ENCODE measurements at regions of chr6 and their contacts with region 1.

Region 1: GRCh38 chr6:41787219-41787917 is at the start of gene TOMM6:
- DNase-seq: peak; percentile 91
- H3K4me3 ChIP-seq: peak within 1 kb of the TSS; percentile 66 to 100
- H3K27ac ChIP-seq: peak within 1 kb of the TSS; percentile 90 to 93
- H3K4me1 ChIP-seq: peaks cover 9 to 17% of the 10 kb centered on the region in 2 experiments; a peak in 2 of 4 replicates
- H3K27me3 ChIP-seq: no peaks in the 10 kb centered on the region
- CTCF ChIP-seq: peak; percentile 70
- EP300 ChIP-seq: no peak
- RAD21 ChIP-seq: peak; percentile 13; the same call in 1 of the 2 replicates
- polyA plus RNA-seq, gene TOMM6: 493 and 565 TPM in 2 replicates

Region 2: DNA sequence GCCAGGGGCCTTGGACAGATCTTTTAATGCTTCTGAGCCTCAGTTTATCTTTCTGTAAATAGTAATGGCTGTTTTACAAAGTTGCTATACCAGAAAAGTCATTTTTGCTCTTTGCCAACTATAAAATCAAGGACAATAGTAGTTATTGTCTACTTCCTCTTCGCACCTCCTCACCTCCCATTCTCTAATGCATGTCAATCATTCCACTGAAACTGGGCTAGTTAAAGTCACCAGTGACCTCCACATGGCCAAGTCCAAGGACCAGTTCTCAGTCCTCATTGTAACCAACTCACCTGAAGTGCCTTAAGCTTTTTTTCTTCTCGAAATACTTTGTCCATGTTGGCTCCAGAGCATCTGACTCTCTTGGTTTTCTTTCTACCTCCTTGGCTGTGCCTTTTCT is 400.8 kb before region 1 on chr6:
- CTCF ChIA-PET with region 1: no interaction called
- POLR2A ChIA-PET with region 1: no interaction called
- DNase-seq: no peak
- H3K4me3 ChIP-seq: no peak overlapping the region
- H3K27ac ChIP-seq: no peak overlapping the region
- H3K4me1 ChIP-seq: no peaks in the 10 kb centered on the region
- H3K27me3 ChIP-seq: peaks cover 60% of the 10 kb centered on the region
- CTCF ChIP-seq: no peak
- EP300 ChIP-seq: no peak
- RAD21 ChIP-seq: no peak

Region 3: DNA sequence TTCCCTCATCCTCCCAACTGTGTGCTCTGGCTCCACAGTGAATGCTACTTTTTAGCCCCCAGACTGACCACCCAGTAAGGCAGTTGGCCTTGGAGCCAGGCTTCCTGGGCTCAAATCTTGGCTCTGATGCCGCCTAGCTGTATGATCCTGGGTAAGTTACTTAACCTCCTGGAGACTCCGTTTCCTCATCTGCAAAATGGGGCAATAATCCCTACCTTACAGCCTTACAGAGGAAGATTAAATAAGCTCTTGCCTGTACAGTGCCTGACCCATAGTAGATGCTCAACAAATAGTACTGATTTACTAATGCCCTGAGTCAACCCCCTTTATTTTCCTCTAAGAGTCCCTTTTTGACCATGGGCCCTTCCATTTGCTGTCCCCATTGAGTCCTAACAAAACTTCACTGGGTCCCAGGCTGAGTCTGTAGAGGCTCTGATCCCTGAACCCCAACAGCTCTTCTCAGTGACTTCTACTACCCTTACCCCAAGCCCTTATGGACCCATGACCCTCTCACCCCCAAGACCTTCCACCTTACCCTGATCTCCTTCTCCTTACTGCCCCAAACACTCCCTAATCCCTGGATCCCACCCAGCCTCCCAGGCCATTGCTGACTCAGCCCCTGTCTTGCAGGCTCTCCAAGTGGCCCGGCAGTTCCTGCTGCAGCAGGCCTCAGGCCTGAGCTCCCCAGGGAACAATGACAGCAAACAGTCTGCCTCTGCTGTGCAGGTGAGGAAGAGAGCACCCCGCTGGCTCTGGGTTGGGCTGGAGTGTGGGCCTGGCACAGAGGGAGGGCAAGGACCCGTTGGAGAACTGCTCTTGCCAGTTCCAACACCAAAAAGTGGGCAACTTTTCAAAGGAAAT is 209.8 kb before region 1 on chr6:
- CTCF ChIA-PET with region 1: no interaction called
- POLR2A ChIA-PET with region 1: no interaction called
- DNase-seq: no peak
- H3K4me3 ChIP-seq: no peak overlapping the region
- H3K27ac ChIP-seq: peak overlapping the region in 1 of 2 experiments; percentile 65; a peak in 3 of 4 replicates
- H3K4me1 ChIP-seq: peaks cover 24 to 40% of the 10 kb centered on the region in 2 experiments; a peak in 3 of 4 replicates
- H3K27me3 ChIP-seq: no peaks in the 10 kb centered on the region
- CTCF ChIP-seq: no peak
- EP300 ChIP-seq: no peak
- RAD21 ChIP-seq: no peak

Region 4: GRCh38 chr6:41683510-41684310 is 103.7 kb before region 1 on chr6:
- CTCF ChIA-PET with region 1: interaction called, 49 read pairs
- POLR2A ChIA-PET with region 1: no interaction called
- DNase-seq: peak; percentile 96
- H3K4me3 ChIP-seq: peak overlapping the region in 1 of 2 experiments; percentile 35; a peak in 1 of 4 replicates
- H3K27ac ChIP-seq: no peak overlapping the region
- H3K4me1 ChIP-seq: peaks cover 11 to 14% of the 10 kb centered on the region in 2 experiments; a peak in 3 of 4 replicates
- H3K27me3 ChIP-seq: no peaks in the 10 kb centered on the region
- CTCF ChIP-seq: peak; percentile 89
- EP300 ChIP-seq: no peak
- RAD21 ChIP-seq: peak; percentile 91

Region 5: DNA sequence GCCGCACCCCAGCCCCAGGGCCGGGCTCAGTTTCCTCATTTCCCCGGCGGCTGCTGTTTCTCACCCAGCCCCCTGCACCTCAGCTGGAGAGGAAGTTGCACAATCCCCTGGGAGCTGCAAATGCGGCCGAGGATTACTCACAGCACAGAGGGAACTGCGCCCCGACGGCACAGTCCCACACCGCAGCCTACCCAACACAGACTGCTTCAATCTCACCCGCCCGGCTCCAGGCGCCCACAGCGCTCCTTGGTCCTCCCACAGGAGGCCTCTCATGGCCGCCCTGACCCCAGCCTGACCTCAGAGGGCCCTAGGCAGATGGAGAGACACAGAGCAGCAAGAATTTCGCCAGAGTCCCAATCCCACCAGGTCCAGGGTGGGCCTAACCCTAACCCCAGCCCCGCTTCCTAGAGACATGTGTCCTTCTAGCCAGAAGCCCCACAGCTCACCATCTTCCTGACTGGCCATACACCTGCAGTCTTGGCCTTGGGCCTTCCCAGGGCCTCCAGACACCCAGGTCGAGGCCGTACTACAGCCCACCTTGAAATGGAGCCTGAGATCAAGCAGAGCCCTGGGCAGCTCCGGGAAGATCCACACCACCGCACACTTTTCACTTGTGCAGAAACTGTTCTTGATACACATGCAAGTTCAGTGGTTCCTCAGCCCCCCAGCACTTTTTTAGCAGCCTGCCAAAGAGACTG is 63.7 kb before region 1 on chr6:
- CTCF ChIA-PET with region 1: interaction called, 32 read pairs
- POLR2A ChIA-PET with region 1: no interaction called
- DNase-seq: no peak
- H3K4me3 ChIP-seq: no peak overlapping the region
- H3K27ac ChIP-seq: peak overlapping the region in 1 of 2 experiments; percentile 51; a peak in 2 of 4 replicates
- H3K4me1 ChIP-seq: peaks cover 14 to 25% of the 10 kb centered on the region in 2 experiments; a peak in 2 of 4 replicates
- H3K27me3 ChIP-seq: no peaks in the 10 kb centered on the region
- CTCF ChIP-seq: no peak
- EP300 ChIP-seq: peak in 1 of 2 experiments; percentile 24; a peak in 1 of 4 replicates
- RAD21 ChIP-seq: no peak

Region 6: DNA sequence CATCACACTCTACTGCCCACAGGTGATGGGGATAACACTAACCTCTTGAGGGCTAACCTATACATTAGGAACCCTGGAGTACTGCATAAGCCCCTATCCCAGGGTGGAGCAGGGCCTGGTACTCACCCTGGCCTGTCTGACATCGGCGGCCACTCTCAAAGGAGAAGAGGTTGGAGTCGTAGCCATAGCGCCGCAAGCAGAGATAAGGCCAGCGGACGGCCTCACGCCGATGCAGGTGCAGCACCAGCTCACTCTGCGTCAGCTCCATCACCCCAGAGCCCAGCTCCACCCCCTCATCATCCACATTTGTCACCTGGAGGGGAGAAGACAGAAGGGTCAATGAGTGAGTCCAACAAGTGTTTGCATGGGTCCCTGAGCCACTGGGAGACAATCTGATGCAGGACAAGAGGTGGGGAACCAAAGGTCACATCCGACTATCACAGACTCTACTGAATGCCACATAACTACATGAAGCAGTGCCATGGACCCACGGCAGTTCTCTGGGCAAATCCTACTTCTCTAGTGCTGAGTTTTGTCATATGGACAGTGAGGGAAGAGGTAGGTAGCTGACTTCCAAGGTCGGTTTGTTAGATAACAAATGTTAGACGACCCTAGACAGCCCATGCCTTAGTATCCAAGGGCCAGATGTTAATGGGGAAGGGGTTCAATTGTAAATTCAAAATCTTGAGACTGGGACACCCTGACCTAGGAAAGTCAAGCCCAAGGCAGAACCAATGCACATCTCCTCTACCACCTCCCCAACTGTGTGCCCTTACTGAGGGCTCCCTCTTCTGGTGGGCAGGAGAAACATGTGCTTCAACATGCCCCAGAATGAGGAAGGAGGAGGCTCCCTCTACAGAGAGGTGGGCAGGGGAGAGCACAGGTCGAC is 11.8 kb before region 1 on chr6:
- CTCF ChIA-PET with region 1: interaction called, 28 read pairs
- POLR2A ChIA-PET with region 1: no interaction called
- DNase-seq: peak; percentile 71
- H3K4me3 ChIP-seq: no peak overlapping the region; a peak in 1 of 4 replicates
- H3K27ac ChIP-seq: no peak overlapping the region
- H3K4me1 ChIP-seq: peaks cover 5 to 9% of the 10 kb centered on the region in 2 experiments; a peak in 2 of 4 replicates
- H3K27me3 ChIP-seq: no peaks in the 10 kb centered on the region
- CTCF ChIP-seq: peak; percentile 72
- EP300 ChIP-seq: no peak
- RAD21 ChIP-seq: peak; percentile 73

Region 7: DNA sequence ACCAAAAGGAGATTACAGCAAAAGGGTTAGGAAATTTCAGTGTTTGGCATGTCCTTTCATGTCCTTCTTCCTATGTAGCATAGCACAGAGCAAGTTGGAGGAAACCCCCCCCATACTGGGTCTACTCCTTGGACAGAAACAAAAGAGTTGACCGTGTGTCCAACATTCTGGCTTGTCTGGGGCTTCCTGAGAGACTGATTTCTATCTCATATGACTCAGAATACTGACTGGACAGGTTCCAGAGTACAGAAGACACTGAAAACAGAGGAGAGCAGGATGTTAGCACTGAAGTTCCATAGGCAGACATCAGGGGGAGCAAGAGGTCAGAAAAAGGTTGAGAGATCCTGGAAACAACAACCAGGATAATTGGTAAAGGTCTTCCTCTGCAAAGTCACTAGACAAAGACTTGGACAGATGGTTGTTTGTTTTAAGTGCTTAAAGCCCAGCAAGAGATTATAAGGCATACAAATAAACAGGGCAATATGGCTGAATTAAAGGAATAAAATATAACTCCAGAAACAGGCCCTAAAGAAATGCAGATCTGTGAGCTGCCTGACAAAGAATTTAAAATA is 59.4 kb after region 1 on chr6:
- CTCF ChIA-PET with region 1: interaction called, 11 read pairs
- POLR2A ChIA-PET with region 1: no interaction called
- DNase-seq: peak; percentile 70
- H3K4me3 ChIP-seq: no peak overlapping the region
- H3K27ac ChIP-seq: peak overlapping the region; percentile 83 to 86
- H3K4me1 ChIP-seq: no peaks in the 10 kb centered on the region
- H3K27me3 ChIP-seq: no peaks in the 10 kb centered on the region
- CTCF ChIP-seq: peak; percentile 88
- EP300 ChIP-seq: no peak
- RAD21 ChIP-seq: peak; percentile 84

Region 8: DNA sequence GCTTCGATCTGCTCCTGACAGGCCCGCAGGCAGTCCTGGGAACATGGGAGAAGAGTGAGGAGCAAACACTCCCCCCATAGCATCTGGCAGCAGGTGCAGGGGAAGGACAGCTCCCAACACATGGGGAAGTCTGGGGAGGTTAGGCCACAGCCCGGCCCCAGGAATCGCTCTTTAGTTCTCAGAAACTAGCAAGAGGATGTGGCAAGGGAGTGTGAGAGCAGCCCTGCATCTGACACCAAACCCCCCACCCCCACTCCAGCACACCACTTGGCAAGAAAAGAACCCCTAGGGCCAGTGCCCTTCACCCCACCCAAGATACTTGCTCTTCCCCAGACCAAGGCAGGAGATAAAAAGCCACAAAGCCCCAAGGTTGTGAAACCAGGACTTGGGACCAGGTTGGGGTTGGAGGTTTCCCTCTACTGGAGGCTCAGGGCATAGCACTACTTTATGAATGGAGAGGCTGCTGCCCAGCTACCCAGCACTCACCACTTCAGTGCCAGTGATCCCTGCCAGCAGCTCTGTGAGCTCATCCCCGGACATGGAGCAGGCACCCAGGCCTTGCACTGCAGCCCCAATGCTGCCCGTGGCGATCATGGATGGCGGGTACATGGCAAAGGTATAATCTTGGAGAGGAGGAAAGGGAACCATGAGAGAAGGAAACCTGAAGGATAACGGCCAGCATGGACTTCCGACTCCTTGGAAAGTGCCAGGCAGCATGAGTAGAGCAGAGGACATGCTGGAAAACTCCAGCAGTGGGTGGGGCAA is 148.9 kb after region 1 on chr6:
- CTCF ChIA-PET with region 1: interaction called, 25 read pairs
- POLR2A ChIA-PET with region 1: no interaction called
- DNase-seq: peak; percentile 83
- H3K4me3 ChIP-seq: peak overlapping the region in 1 of 2 experiments; percentile 14; a peak in 1 of 4 replicates
- H3K27ac ChIP-seq: peak overlapping the region; percentile 46 to 50; a peak in 3 of 4 replicates
- H3K4me1 ChIP-seq: peaks cover 19 to 22% of the 10 kb centered on the region in 2 experiments; a peak in 3 of 4 replicates
- H3K27me3 ChIP-seq: no peaks in the 10 kb centered on the region
- CTCF ChIP-seq: peak; percentile 79
- EP300 ChIP-seq: no peak
- RAD21 ChIP-seq: peak; percentile 72

Measured in SK-N-SH (cell line).